ENCODE measurements at regions of chr1 and their contacts with region 1.

Region 1: GRCh38 chr1:66446261-66447001 is 87.5 kb upstream of the SGIP1 start:
- DNase-seq: peak; percentile 74

Region 2: DNA sequence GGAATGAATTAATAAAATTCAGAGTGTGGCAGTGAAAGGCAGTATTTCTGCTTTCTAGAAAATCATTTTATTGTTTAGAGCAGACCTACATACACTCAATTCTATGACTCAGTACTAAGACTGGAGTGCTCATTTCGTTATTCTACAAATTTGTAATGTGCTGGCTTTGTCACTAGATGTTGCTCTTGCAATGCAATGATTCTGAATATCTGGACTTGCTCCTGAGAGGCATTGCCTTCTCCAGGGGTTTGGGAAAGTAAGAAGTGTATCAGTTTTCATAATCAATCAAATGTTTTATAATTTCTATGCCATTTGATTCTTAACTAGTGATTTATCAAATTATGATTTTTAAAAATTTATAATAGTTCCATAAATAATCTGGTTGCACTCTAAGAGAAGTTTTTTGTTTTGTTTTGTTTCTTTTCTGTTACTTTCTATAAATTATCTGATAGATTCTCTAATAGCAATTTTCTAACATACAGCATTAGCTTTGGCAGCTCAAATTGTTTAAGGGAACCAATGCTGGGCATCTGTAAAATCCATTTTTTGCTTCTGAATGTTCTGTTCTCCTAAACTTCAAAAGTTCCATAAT is 193.0 kb before region 1 on chr1:
- CTCF ChIA-PET with region 1: interaction called, 37 read pairs
- POLR2A ChIA-PET with region 1: no interaction called
- DNase-seq: peak; percentile 76

Region 3: GRCh38 chr1:66464802-66465201 is 18.4 kb after region 1 on chr1:
- CTCF ChIA-PET with region 1: no interaction called
- POLR2A ChIA-PET with region 1: no interaction called
- DNase-seq: no peak

Region 4: DNA sequence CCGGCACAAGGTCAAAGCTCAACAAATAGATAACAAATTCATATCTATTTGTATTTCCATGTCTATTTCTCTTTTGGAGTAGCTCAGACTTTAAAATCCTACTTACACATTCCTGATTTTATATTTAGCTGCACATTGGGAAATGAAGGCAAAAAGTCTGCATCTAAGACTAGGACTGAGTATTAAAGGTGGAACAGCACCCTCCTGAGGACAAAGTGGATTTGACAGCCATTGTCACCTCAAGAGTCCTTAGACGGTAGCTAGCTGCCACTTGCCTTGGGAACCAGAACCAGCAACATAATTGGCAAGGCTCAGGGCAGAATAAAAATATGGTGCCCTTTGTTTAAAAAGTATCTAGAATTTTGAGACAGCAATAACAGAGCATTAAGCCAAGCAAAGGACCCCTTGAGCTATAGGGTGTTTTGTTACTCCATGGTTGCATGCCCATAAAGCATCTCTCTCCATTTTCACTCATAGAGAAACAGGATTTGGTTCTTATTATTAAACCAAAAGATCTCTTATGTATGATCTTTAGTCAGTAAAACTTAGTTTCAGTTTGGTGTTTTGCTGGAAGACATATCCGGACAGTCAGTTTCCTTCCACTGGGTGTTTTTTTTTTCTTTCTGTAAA is 57.5 kb after region 1 on chr1:
- CTCF ChIA-PET with region 1: interaction called, 15 read pairs
- POLR2A ChIA-PET with region 1: no interaction called
- DNase-seq: peak; percentile 72

Region 5: GRCh38 chr1:66752000-66752592 is 305.7 kb after region 1 on chr1 and contains the start of gene DYNLT5:
- CTCF ChIA-PET with region 1: no interaction called
- POLR2A ChIA-PET with region 1: no interaction called
- DNase-seq: no peak

Measured in HEK293T (cell line).